ENCODE measurements at regions of chr2 and their contacts with region 1.

Region 1: GRCh38 chr2:25991965-25992364 is 9.7 kb upstream of the KIF3C start:
- DNase-seq: no peak
- ATAC-seq: peak; percentile 70 to 71; a peak in 5 of 6 replicates
- H3K4me3 ChIP-seq: 0 out of 3 replicates have a peak overlapping the region, but pooled peaks have one; percentile 5
- H3K27ac ChIP-seq: peak overlapping the region; percentile 80 to 93
- H3K4me1 ChIP-seq: peaks cover 25% of the 10 kb centered on the region
- CTCF ChIP-seq: no peak
- EP300 ChIP-seq: no peak
- POLR2A ChIP-seq: no peak
- RAD21 ChIP-seq: no peak

Region 2: DNA sequence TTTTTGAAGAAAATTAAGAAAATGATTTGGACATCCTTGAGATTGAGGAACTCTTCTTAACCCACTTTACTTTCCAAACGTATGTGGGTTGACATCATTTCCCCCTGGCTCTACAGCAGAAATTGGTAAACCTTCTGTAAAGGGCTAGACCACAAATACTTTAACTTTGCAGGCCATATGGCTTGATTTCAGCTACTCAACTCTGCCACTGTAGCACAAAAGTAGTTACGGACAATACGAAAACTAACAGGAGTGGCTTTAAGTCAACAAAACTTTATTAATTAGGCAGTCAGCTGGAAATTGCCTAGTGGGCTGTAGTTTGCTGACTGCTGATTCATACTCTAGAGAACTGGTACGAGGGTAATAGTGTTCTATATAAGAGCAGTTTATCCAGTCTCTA is 235.4 kb before region 1 on chr2:
- CTCF ChIA-PET with region 1: no interaction called
- POLR2A ChIA-PET with region 1: no interaction called
- DNase-seq: no peak
- ATAC-seq: no peak
- H3K4me3 ChIP-seq: no peak overlapping the region
- H3K27ac ChIP-seq: no peak overlapping the region
- H3K4me1 ChIP-seq: no peaks in the 10 kb centered on the region
- CTCF ChIP-seq: no peak
- EP300 ChIP-seq: no peak
- POLR2A ChIP-seq: no peak
- RAD21 ChIP-seq: no peak

Region 3: DNA sequence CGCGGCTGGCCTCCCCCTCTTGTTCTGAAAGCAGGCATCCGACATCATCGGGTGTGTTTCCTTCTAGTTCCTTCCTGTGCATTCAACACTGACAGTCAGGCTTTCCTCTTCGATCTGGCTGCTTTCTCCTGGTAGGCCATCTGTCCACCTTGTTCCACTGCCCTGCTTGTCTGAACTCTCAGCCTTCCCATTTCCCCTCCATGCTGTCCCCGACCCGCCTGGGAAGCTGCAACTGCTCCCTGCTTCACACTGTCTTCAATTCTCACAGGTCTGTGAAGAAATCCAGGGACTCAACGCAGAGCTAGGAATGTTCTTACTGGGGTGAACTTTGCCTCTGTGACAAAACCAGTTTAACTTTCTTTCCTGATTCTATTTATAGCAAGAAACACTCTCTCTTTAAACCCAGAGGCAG is 52.7 kb before region 1 on chr2:
- CTCF ChIA-PET with region 1: no interaction called
- POLR2A ChIA-PET with region 1: no interaction called
- DNase-seq: no peak
- ATAC-seq: peak in 1 of 2 experiments; percentile 16; a peak in 1 of 6 replicates
- H3K4me3 ChIP-seq: no peak overlapping the region
- H3K27ac ChIP-seq: no peak overlapping the region
- H3K4me1 ChIP-seq: no peaks in the 10 kb centered on the region
- CTCF ChIP-seq: no peak
- EP300 ChIP-seq: no peak
- POLR2A ChIP-seq: no peak
- RAD21 ChIP-seq: no peak

Region 4: GRCh38 chr2:25960920-25961319 is 31.0 kb before region 1 on chr2:
- CTCF ChIA-PET with region 1: interaction called, 16 read pairs
- POLR2A ChIA-PET with region 1: no interaction called
- DNase-seq: no peak
- ATAC-seq: no peak
- H3K4me3 ChIP-seq: no peak overlapping the region
- H3K27ac ChIP-seq: peak overlapping the region in 1 of 2 experiments; percentile 2; a peak in 1 of 6 replicates
- H3K4me1 ChIP-seq: peaks cover 50% of the 10 kb centered on the region
- CTCF ChIP-seq: no peak
- EP300 ChIP-seq: no peak
- POLR2A ChIP-seq: no peak
- RAD21 ChIP-seq: no peak

Region 5: GRCh38 chr2:26018176-26018716 is 26.3 kb after region 1 on chr2:
- CTCF ChIA-PET with region 1: interaction called, 12 read pairs
- POLR2A ChIA-PET with region 1: interaction called, 7 read pairs
- DNase-seq: peak; percentile 95
- ATAC-seq: peak; percentile 98 to 99
- H3K4me3 ChIP-seq: no peak overlapping the region
- H3K27ac ChIP-seq: peak overlapping the region; percentile 73 to 93
- H3K4me1 ChIP-seq: peaks cover 73% of the 10 kb centered on the region
- CTCF ChIP-seq: no peak
- EP300 ChIP-seq: peak; percentile 41 to 44; a peak in 2 of 5 replicates
- POLR2A ChIP-seq: no peak
- RAD21 ChIP-seq: peak in 1 of 2 experiments; percentile 21; a peak in 2 of 5 replicates

Region 6: DNA sequence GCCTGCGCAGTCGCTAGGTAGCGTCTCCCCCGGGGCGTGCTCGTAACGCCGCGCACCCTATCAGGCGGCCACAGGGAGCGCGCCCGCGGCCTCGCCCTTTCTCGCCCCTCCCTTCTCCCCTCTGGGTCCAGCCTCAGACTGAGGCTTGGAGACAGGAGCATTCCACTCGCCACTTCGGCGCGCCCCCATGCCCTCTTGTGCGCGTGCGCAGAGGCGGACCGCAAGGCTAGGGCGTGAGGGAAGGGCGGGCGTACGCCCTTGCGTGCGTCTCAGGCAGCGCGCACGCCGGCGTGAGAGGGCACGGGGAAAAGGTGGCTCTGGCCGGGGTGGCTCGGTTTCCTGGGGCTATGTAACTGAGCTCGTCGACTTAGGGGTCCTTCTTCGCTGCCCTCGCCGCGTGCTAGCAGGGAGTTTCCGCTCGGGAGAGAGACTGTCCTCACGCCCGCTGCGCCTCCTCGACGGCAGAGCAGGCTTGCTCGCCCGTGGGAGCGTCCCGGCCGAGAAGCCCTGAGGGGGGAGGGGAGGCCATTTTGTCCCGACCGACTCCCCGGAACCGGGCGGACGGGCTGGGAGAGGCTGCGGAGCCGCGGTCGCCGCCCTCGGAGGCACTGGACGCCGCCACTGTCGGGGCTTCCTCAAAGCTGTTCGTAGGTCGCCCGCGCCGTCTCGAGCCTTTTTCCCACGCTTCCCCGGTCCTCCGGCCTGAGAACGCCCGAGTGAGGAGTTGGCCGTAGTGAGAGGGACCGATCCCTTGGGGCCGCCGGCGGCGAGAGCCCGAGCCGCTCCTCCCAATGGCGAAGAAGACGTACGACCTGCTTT is 42.1 kb after region 1 on chr2 and contains the start of gene RAB10:
- CTCF ChIA-PET with region 1: interaction called, 19 read pairs
- POLR2A ChIA-PET with region 1: interaction called, 16 read pairs
- DNase-seq: peak; percentile 97 to 100
- ATAC-seq: peak; percentile 88 to 89
- H3K4me3 ChIP-seq: peak within 1 kb of the TSS; percentile 92
- H3K27ac ChIP-seq: peak within 1 kb of the TSS; percentile 89 to 95
- H3K4me1 ChIP-seq: peaks cover 25% of the 10 kb centered on the region
- CTCF ChIP-seq: no peak
- EP300 ChIP-seq: no peak
- POLR2A ChIP-seq: peak; percentile 97
- RAD21 ChIP-seq: peak in 1 of 2 experiments; percentile 31; a peak in 2 of 5 replicates
- polyA plus RNA-seq, gene RAB10: 332 and 692 TPM in 2 replicates

Region 7: DNA sequence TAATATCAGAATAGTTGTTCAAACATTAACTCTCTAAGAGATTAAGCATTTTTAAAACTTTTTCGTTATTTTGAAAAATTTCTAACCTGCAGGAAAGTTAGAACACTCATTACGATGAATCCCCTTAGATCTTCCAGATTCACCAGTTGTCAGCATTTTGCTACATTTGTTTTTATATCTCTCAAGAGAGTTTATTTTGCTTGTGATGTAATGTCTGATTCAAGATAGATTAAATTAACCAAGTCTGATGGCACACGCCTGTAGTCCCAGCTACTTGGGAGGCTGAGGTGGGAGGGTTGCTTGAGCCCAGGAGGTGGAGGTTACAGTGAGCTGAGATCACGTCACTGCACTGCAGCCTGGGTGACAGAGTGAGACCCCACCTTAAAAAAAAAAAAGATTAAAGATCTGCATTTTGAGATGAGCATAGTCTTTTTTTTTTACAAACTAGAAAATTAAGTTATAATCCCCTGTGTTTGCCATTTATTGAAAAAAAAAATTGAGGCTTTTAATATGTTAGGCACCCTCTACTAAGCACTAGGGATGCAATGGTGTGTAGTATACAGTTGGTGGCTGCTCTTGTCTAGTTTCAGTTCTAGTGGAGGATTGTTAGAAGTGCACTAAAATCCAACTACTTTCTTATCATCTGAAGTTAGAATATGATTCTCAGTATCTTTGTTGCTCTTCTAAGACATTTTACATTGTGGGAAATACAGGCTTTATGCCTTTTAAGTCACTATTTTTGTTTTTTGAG is 62.8 kb after region 1 on chr2:
- CTCF ChIA-PET with region 1: interaction called, 21 read pairs
- POLR2A ChIA-PET with region 1: interaction called, 3 read pairs
- DNase-seq: no peak
- ATAC-seq: peak in 1 of 2 experiments; percentile 53; a peak in 3 of 6 replicates
- H3K4me3 ChIP-seq: no peak overlapping the region
- H3K27ac ChIP-seq: no peak overlapping the region
- H3K4me1 ChIP-seq: peaks cover 74% of the 10 kb centered on the region
- CTCF ChIP-seq: no peak
- EP300 ChIP-seq: no peak
- POLR2A ChIP-seq: no peak
- RAD21 ChIP-seq: no peak

Region 8: DNA sequence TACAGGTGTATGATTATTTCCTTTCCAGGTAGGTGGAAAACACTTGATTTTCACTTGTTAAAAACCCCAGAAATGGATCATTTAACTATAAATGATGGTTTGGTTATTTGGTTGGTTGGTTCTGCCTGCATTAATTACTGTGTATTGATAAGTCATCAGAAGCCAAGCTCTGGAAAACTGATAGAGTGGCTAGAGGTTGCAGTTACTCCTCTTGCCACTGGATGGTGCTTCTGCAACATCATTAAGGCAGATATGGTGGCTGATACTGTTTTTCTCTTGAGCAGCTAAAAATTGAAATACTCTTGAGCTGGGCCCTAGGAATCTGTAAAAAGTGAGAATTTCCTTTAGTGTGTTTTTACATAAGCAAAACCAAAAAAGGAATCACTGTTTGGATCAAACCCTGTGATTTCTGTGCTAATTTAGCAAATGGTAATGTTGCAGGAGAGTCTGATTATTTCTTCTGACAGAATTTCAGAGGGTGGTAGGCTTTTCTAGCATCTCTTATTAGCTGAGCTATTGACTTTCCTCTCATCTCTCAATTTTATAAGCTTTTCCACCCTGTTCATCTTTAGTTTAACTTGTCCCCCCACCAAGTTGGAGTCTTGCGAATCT is 96.2 kb after region 1 on chr2:
- CTCF ChIA-PET with region 1: interaction called, 71 read pairs
- POLR2A ChIA-PET with region 1: no interaction called
- DNase-seq: peak; percentile 48 to 51
- ATAC-seq: peak; percentile 74 to 77; a peak in 5 of 6 replicates
- H3K4me3 ChIP-seq: no peak overlapping the region
- H3K27ac ChIP-seq: no peak overlapping the region
- H3K4me1 ChIP-seq: peaks cover 54% of the 10 kb centered on the region
- CTCF ChIP-seq: peak; percentile 77
- EP300 ChIP-seq: no peak
- POLR2A ChIP-seq: no peak
- RAD21 ChIP-seq: peak; percentile 70 to 81